Sciatic nerve (tissue), 2 donors: ENCODE measurements at regions of chr2 and their contacts with region 1.

Region 1: GRCh38 chr2:166773308-166773949 is 114.9 kb upstream of the XIRP2 start:
- DNase-seq: no peak
- ATAC-seq: no peak

Region 2: DNA sequence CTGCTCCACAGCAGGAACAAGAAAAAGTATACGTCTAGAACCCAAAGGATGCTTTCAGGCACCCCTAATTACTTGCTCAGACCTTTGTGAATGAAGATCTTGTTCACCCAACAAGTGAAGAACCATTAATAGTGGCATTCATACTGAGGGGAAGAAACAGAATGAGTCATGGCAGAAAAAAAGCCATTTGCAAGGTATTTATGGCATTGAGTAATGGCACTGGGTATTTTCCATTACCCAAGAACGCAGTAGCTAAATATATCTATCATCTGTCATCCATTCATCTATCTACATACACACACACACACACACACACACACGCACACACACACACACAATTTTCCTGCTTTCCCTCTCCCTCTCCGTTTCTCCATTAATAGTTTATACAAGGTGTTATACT is 58.5 kb after region 1 on chr2:
- intact Hi-C with region 1: loop called (anchors 2 kb)
- DNase-seq: no peak
- ATAC-seq: no peak